Endothelial cell of umbilical vein (primary cell): ENCODE measurements at regions of chr17 and their contacts with region 1.

Region 1: GRCh38 chr17:43200127-43200526 is 11.5 kb upstream of the TMEM106A start:
- DNase-seq: no peak
- H3K4me3 ChIP-seq: no peak overlapping the region
- H3K27ac ChIP-seq: no peak overlapping the region
- H3K4me1 ChIP-seq: no peaks in the 10 kb centered on the region
- H3K27me3 ChIP-seq: no peaks in the 10 kb centered on the region
- CTCF ChIP-seq: no peak
- POLR2A ChIP-seq: no peak

Region 2: DNA sequence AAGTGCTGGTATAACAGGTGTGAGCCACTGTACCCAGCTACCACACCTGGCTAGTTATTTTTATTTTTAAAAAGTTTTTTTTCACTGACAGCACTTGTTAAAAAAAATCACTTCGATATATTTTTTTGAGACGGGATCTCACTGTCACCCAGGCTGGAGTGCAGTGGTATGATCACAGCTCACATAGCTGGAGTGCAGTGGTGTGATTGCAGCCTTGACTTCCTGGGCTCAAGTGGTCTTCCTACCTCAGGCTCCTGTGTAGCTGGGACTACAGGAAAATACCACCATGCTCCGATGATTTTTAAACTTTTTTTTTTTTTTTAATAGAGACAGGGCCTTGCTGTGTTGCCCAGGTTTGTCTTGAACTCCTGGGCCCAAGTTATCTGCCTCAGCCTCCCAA is 16.2 kb before region 1 on chr17:
- CTCF ChIA-PET with region 1: interaction called, 10 read pairs
- POLR2A ChIA-PET with region 1: no interaction called
- dilution Hi-C with region 1: no loop called
- intact Hi-C with region 1: no loop called
- DNase-seq: no peak
- H3K4me3 ChIP-seq: no peak overlapping the region
- H3K27ac ChIP-seq: no peak overlapping the region
- H3K4me1 ChIP-seq: no peaks in the 10 kb centered on the region
- H3K27me3 ChIP-seq: no peaks in the 10 kb centered on the region
- CTCF ChIP-seq: no peak
- POLR2A ChIP-seq: no peak

Region 3: GRCh38 chr17:43211480-43212402 is 11.6 kb after region 1 on chr17 and contains the start of gene TMEM106A:
- CTCF ChIA-PET with region 1: interaction called, 22 read pairs
- POLR2A ChIA-PET with region 1: interaction called, 3 read pairs
- dilution Hi-C with region 1: no loop called
- intact Hi-C with region 1: no loop called
- DNase-seq: peak; percentile 87
- H3K4me3 ChIP-seq: peak within 1 kb of the TSS; percentile 72 to 79 (median 75)
- H3K27ac ChIP-seq: peak within 1 kb of the TSS; percentile 72
- H3K4me1 ChIP-seq: peaks cover 16% of the 10 kb centered on the region
- H3K27me3 ChIP-seq: no peaks in the 10 kb centered on the region
- CTCF ChIP-seq: peak in 1 of 2 donors; percentile 47
- POLR2A ChIP-seq: peak; percentile 96
- total RNA-seq, gene TMEM106A: 11.5 and 14.8 TPM in 2 replicates

Region 4: GRCh38 chr17:43309505-43310332 is 109.6 kb after region 1 on chr17:
- CTCF ChIA-PET with region 1: no interaction called
- POLR2A ChIA-PET with region 1: no interaction called
- dilution Hi-C with region 1: no loop called
- intact Hi-C with region 1: no loop called
- DNase-seq: no peak
- H3K4me3 ChIP-seq: no peak overlapping the region
- H3K27ac ChIP-seq: no peak overlapping the region
- H3K4me1 ChIP-seq: no peaks in the 10 kb centered on the region
- H3K27me3 ChIP-seq: no peaks in the 10 kb centered on the region
- CTCF ChIP-seq: no peak
- POLR2A ChIP-seq: no peak

Region 5: GRCh38 chr17:43967251-43967875 is 767.2 kb after region 1 on chr17:
- CTCF ChIA-PET with region 1: no interaction called
- POLR2A ChIA-PET with region 1: no interaction called
- dilution Hi-C with region 1: no loop called
- intact Hi-C with region 1: no loop called
- DNase-seq: no peak
- H3K4me3 ChIP-seq: no peak overlapping the region
- H3K27ac ChIP-seq: no peak overlapping the region
- H3K4me1 ChIP-seq: no peaks in the 10 kb centered on the region
- H3K27me3 ChIP-seq: peaks cover 3 to 12% of the 10 kb centered on the region in 2 experiments
- CTCF ChIP-seq: no peak
- POLR2A ChIP-seq: no peak